ENCODE measurements at regions of chr9 and their contacts with region 1.

Region 1: DNA sequence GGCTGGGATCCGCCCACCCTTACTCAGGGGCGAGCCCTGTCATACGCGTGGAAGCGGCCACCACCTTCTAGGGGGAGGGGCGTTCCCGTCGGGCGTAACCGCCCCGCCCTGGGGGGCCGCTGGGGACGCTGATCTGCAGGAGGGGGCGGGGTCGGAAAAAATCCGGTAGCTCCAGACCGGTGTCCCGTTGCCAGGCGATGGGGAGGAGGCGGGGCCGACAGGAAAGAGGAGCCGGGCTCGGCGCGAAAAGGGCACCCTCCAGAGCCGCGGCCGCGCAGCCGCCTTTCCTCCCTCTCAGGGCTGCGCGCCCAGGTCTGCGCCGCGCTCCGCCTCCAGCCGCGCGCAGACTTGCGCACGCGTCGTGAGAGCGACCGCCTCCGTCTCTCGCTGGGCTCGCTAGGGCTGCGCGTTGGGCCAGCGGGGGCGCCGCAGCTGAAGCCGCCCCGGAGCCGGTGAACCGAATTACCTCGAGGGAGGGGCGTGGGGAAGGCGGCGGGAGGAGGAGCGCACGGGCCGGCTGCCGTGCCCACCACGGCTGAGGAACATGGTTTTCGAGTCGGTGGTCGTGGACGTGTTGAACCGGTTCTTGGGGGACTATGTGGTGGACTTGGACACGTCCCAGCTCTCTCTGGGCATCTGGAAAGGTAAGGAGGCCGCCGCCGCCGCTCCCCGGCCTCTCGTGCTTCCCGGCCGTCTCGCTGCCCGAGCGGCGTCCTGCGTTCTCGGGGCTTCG is at the start of gene VPS13A:
- DNase-seq: peak; percentile 94
- ATAC-seq: peak; percentile 84
- H3K4me3 ChIP-seq: peak within 1 kb of the TSS; percentile 60 to 88 (median 78)
- H3K4me3 Mint-ChIP-seq: peak within 1 kb of the TSS; percentile 94
- H3K27ac ChIP-seq: peak within 1 kb of the TSS; percentile 78 to 92
- H3K27ac Mint-ChIP-seq: peak within 1 kb of the TSS; percentile 96
- H3K4me1 ChIP-seq: peaks cover 6 to 18% of the 10 kb centered on the region in 2 donors
- H3K4me1 Mint-ChIP-seq: peaks cover 28% of the 10 kb centered on the region
- H3K27me3 ChIP-seq: no peaks in the 10 kb centered on the region
- H3K27me3 Mint-ChIP-seq: no peaks in the 10 kb centered on the region
- CTCF ChIP-seq: peak; percentile 27
- total RNA-seq, gene VPS13A: 57.8 and 67.9 TPM in 2 replicates

Region 2: GRCh38 chr9:76458903-76459690 is 718.2 kb before region 1 on chr9 and contains the start of gene GCNT1:
- CTCF ChIA-PET with region 1: no interaction called
- POLR2A ChIA-PET with region 1: no interaction called
- intact Hi-C with region 1: loop called (anchors 2 kb)
- DNase-seq: peak; percentile 95
- ATAC-seq: peak; percentile 93
- H3K4me3 ChIP-seq: peak within 1 kb of the TSS; percentile 73 to 98 (median 93)
- H3K4me3 Mint-ChIP-seq: peak within 1 kb of the TSS; percentile 90
- H3K27ac ChIP-seq: peak within 1 kb of the TSS; percentile 52 to 65
- H3K27ac Mint-ChIP-seq: peak within 1 kb of the TSS; percentile 71
- H3K4me1 ChIP-seq: peaks cover 51 to 54% of the 10 kb centered on the region in 2 donors
- H3K4me1 Mint-ChIP-seq: peaks cover 51% of the 10 kb centered on the region
- H3K27me3 ChIP-seq: no peaks in the 10 kb centered on the region
- H3K27me3 Mint-ChIP-seq: peaks cover 7% of the 10 kb centered on the region
- CTCF ChIP-seq: peak; percentile 52
- total RNA-seq, gene GCNT1: 9.1 and 12.0 TPM in 2 replicates

Region 3: DNA sequence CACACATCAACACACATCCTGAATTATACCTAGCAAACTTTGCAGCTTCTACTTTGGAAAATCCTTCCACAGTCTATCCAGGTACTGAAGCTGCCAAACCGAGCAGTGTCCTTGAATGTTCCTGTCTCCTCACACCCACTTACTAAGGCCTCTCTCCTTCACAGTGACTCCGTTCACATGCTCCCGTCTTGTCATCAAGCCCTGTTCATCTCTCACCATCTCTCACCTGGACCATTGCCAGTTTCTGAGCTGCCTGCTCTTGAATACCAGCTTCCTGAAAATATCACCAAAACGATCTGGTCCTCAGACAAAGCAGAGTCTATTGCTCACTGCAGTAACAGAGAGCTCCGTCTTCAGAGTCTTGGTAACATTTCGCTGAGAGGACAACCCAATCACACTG is 661.0 kb before region 1 on chr9:
- CTCF ChIA-PET with region 1: no interaction called
- POLR2A ChIA-PET with region 1: no interaction called
- intact Hi-C with region 1: no loop called
- DNase-seq: no peak
- ATAC-seq: no peak
- H3K4me3 ChIP-seq: no peak overlapping the region
- H3K4me3 Mint-ChIP-seq: no peak overlapping the region
- H3K27ac ChIP-seq: no peak overlapping the region
- H3K27ac Mint-ChIP-seq: no peak overlapping the region
- H3K4me1 ChIP-seq: no peaks in the 10 kb centered on the region
- H3K4me1 Mint-ChIP-seq: peaks cover 7% of the 10 kb centered on the region
- H3K27me3 ChIP-seq: no peaks in the 10 kb centered on the region
- H3K27me3 Mint-ChIP-seq: no peaks in the 10 kb centered on the region
- CTCF ChIP-seq: no peak

Region 4: GRCh38 chr9:77163884-77164283 is 13.4 kb before region 1 on chr9:
- CTCF ChIA-PET with region 1: interaction called, 40 read pairs
- POLR2A ChIA-PET with region 1: no interaction called
- intact Hi-C with region 1: no loop called
- DNase-seq: no peak
- ATAC-seq: no peak
- H3K4me3 ChIP-seq: no peak overlapping the region
- H3K4me3 Mint-ChIP-seq: no peak overlapping the region
- H3K27ac ChIP-seq: no peak overlapping the region
- H3K27ac Mint-ChIP-seq: no peak overlapping the region
- H3K4me1 ChIP-seq: no peaks in the 10 kb centered on the region
- H3K4me1 Mint-ChIP-seq: no peaks in the 10 kb centered on the region
- H3K27me3 ChIP-seq: no peaks in the 10 kb centered on the region
- H3K27me3 Mint-ChIP-seq: peaks cover 24% of the 10 kb centered on the region
- CTCF ChIP-seq: no peak

Region 5: DNA sequence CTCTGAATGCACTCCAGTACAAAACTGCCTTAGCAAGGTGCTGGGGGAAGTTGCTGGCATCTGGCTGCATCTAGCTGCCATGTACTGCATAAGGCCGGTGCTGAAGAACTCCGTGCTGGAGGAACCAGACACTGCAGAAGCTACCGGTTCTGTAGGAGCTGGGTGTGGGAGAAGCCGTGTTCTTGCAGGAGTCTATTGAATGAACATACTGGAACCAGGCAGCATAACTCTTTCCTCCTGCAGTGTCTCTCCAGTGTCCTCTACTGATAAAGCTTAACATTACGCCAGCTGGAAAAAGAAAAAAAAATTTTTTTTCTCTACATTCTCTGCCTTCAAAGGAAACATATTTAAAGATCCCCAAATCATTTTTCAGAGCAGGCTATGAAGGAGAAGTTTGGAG is 38.5 kb after region 1 on chr9:
- CTCF ChIA-PET with region 1: no interaction called
- POLR2A ChIA-PET with region 1: no interaction called
- intact Hi-C with region 1: no loop called
- DNase-seq: no peak
- ATAC-seq: no peak
- H3K4me3 ChIP-seq: no peak overlapping the region
- H3K4me3 Mint-ChIP-seq: no peak overlapping the region
- H3K27ac ChIP-seq: no peak overlapping the region
- H3K27ac Mint-ChIP-seq: no peak overlapping the region
- H3K4me1 ChIP-seq: no peaks in the 10 kb centered on the region
- H3K4me1 Mint-ChIP-seq: no peaks in the 10 kb centered on the region
- H3K27me3 ChIP-seq: no peaks in the 10 kb centered on the region
- H3K27me3 Mint-ChIP-seq: no peaks in the 10 kb centered on the region
- CTCF ChIP-seq: no peak

Region 6: GRCh38 chr9:77521091-77521490 is 343.8 kb after region 1 on chr9:
- CTCF ChIA-PET with region 1: no interaction called
- POLR2A ChIA-PET with region 1: no interaction called
- intact Hi-C with region 1: no loop called
- DNase-seq: no peak
- ATAC-seq: no peak
- H3K4me3 ChIP-seq: no peak overlapping the region
- H3K4me3 Mint-ChIP-seq: no peak overlapping the region
- H3K27ac ChIP-seq: no peak overlapping the region
- H3K27ac Mint-ChIP-seq: no peak overlapping the region
- H3K4me1 ChIP-seq: no peaks in the 10 kb centered on the region
- H3K4me1 Mint-ChIP-seq: no peaks in the 10 kb centered on the region
- H3K27me3 ChIP-seq: no peaks in the 10 kb centered on the region
- H3K27me3 Mint-ChIP-seq: peaks cover 8% of the 10 kb centered on the region
- CTCF ChIP-seq: no peak

Region 7: GRCh38 chr9:78053627-78054026 is 876.3 kb after region 1 on chr9:
- CTCF ChIA-PET with region 1: no interaction called
- POLR2A ChIA-PET with region 1: no interaction called
- intact Hi-C with region 1: no loop called
- DNase-seq: no peak
- ATAC-seq: no peak
- H3K4me3 ChIP-seq: no peak overlapping the region
- H3K4me3 Mint-ChIP-seq: no peak overlapping the region
- H3K27ac ChIP-seq: no peak overlapping the region
- H3K27ac Mint-ChIP-seq: no peak overlapping the region
- H3K4me1 ChIP-seq: peaks cover 5% of the 10 kb centered on the region in 2 donors
- H3K4me1 Mint-ChIP-seq: peaks cover 7% of the 10 kb centered on the region
- H3K27me3 ChIP-seq: no peaks in the 10 kb centered on the region
- H3K27me3 Mint-ChIP-seq: peaks cover 30% of the 10 kb centered on the region
- CTCF ChIP-seq: no peak

Region 8: GRCh38 chr9:78213712-78214111 is 1036.4 kb after region 1 on chr9:
- CTCF ChIA-PET with region 1: no interaction called
- POLR2A ChIA-PET with region 1: no interaction called
- intact Hi-C with region 1: loop called (anchors 5 kb)
- DNase-seq: peak; percentile 48
- ATAC-seq: no peak
- H3K4me3 ChIP-seq: no peak overlapping the region
- H3K4me3 Mint-ChIP-seq: no peak overlapping the region
- H3K27ac ChIP-seq: no peak overlapping the region
- H3K27ac Mint-ChIP-seq: no peak overlapping the region
- H3K4me1 ChIP-seq: peaks cover 19 to 20% of the 10 kb centered on the region in 2 donors
- H3K4me1 Mint-ChIP-seq: peaks cover 27% of the 10 kb centered on the region
- H3K27me3 ChIP-seq: no peaks in the 10 kb centered on the region
- H3K27me3 Mint-ChIP-seq: peaks cover 1% of the 10 kb centered on the region
- CTCF ChIP-seq: peak; percentile 42

Region 9: DNA sequence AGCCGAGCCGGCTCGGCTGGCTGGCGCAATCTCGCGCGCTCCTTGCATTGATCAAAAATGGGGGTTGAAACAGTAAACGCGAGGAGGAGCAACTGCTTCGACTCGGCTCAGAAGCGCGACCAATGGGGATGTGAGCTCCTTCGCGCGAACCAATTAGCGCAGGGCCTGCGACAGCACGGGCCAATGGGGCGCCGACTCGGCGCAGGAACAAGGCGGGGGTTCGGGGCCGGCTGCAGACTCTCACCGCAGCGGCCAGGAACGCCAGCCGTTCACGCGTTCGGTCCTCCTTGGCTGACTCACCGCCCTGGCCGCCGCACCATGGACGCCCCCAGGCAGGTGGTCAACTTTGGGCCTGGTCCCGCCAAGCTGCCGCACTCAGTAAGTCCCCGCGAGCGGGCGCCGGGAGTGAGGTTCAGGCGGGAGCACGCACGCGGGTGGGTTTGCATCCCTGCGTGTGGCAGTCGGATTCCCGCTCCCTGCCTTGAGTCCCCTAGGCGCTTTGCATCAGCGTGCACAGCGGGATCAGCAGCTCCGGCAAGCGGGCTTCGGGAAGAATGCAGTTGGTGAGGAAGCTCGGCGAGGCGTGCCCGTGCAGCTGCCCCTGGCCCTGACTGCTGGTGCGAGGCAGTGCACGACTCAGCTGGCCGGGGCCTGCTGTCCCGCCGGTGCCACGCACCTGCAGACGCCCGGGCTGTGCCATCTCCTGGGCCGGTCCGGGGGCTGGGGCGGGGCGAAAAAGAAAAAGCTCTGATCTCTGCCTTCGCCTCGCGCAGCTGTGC is 1119.8 kb after region 1 on chr9 and contains the start of gene PSAT1:
- CTCF ChIA-PET with region 1: no interaction called
- POLR2A ChIA-PET with region 1: no interaction called
- intact Hi-C with region 1: loop called (anchors 10 kb)
- DNase-seq: peak; percentile 88
- ATAC-seq: peak; percentile 97
- H3K4me3 ChIP-seq: peak within 1 kb of the TSS; percentile 67 to 77 (median 70)
- H3K4me3 Mint-ChIP-seq: peak within 1 kb of the TSS; percentile 87
- H3K27ac ChIP-seq: no peak within 1 kb of the TSS
- H3K27ac Mint-ChIP-seq: peak within 1 kb of the TSS; percentile 70
- H3K4me1 ChIP-seq: peaks cover 17 to 26% of the 10 kb centered on the region in 2 donors
- H3K4me1 Mint-ChIP-seq: peaks cover 18% of the 10 kb centered on the region
- H3K27me3 ChIP-seq: peaks cover 0 to 17% (median 6%) of the 10 kb centered on the region in 4 experiments
- H3K27me3 Mint-ChIP-seq: no peaks in the 10 kb centered on the region
- CTCF ChIP-seq: no peak
- total RNA-seq, gene PSAT1: 5.0 and 5.2 TPM in 2 replicates

Measured in B cell (primary cell).